ENCODE measurements at regions of chr21 and their contacts with region 1.

Region 1: GRCh38 chr21:38805328-38806152 is at the start of gene ETS2:
- DNase-seq: peak; percentile 83
- H3K4me3 ChIP-seq: peak within 1 kb of the TSS; percentile 88
- H3K27ac ChIP-seq: peak within 1 kb of the TSS; percentile 44
- H3K4me1 ChIP-seq: peaks cover 41% of the 10 kb centered on the region
- CTCF ChIP-seq: peak; percentile 35; the same call in 1 of the 2 replicates
- total RNA-seq, gene ETS2: 9.8 and 10.3 TPM in 2 replicates

Region 2: GRCh38 chr21:38733973-38734546 is 71.5 kb before region 1 on chr21:
- CTCF ChIA-PET with region 1: no interaction called
- POLR2A ChIA-PET with region 1: interaction called, 6 read pairs
- intact Hi-C with region 1: loop called (anchors 5 kb)
- DNase-seq: peak; percentile 57
- H3K4me3 ChIP-seq: peak overlapping the region; percentile 61
- H3K27ac ChIP-seq: no peak overlapping the region
- H3K4me1 ChIP-seq: peaks cover 10% of the 10 kb centered on the region
- CTCF ChIP-seq: peak; percentile 99

Region 3: DNA sequence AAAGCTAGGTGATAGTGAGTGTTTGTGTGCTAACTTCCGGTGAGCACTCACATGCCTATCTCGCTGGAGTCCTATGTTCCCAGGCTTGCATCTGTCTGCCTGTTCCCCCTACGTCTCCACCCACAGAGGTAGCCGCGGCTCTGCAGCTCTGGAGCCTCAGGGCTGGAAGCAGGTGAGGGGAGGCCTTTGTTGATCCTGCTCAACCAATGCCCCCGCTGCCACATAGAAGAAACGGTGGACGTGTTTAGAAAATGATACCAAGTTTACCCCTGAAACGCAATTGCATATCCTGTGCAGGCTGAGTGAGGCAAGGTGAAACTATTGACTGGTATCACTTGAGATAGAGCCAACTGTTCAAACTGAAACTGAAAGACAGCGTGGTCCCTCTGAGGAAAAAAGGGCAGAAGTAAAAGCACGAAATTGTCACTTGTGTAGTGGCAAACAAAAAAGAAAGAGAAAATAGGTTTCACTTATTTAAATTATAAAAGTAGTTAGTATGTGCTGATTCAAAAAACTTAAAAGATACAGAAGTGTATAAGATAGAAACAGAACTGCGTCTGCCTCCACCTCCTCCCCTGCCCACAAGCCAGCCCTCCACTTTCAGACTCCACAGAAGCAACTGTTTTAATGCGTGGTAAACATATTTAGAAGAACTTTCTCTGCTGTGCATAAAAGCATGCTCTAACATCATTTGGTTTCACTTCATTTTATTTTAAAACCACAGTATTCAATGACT is 38.4 kb before region 1 on chr21:
- CTCF ChIA-PET with region 1: no interaction called
- POLR2A ChIA-PET with region 1: interaction called, 4 read pairs
- intact Hi-C with region 1: loop called (anchors 1 kb)
- DNase-seq: peak; percentile 79
- H3K4me3 ChIP-seq: peak overlapping the region; percentile 59
- H3K27ac ChIP-seq: peak overlapping the region; percentile 77
- H3K4me1 ChIP-seq: peaks cover 21% of the 10 kb centered on the region
- CTCF ChIP-seq: no peak

Region 4: GRCh38 chr21:38843806-38844503 is 38.4 kb after region 1 on chr21:
- CTCF ChIA-PET with region 1: no interaction called
- POLR2A ChIA-PET with region 1: no interaction called
- intact Hi-C with region 1: no loop called
- DNase-seq: no peak
- H3K4me3 ChIP-seq: no peak overlapping the region
- H3K27ac ChIP-seq: no peak overlapping the region
- H3K4me1 ChIP-seq: no peaks in the 10 kb centered on the region
- CTCF ChIP-seq: no peak

Region 5: GRCh38 chr21:38861989-38862683 is 56.6 kb after region 1 on chr21:
- CTCF ChIA-PET with region 1: no interaction called
- POLR2A ChIA-PET with region 1: interaction called, 4 read pairs
- intact Hi-C with region 1: loop called (anchors 5 kb)
- DNase-seq: peak; percentile 91
- H3K4me3 ChIP-seq: peak overlapping the region; percentile 24
- H3K27ac ChIP-seq: peak overlapping the region; percentile 78
- H3K4me1 ChIP-seq: peaks cover 44% of the 10 kb centered on the region
- CTCF ChIP-seq: no peak

Region 6: DNA sequence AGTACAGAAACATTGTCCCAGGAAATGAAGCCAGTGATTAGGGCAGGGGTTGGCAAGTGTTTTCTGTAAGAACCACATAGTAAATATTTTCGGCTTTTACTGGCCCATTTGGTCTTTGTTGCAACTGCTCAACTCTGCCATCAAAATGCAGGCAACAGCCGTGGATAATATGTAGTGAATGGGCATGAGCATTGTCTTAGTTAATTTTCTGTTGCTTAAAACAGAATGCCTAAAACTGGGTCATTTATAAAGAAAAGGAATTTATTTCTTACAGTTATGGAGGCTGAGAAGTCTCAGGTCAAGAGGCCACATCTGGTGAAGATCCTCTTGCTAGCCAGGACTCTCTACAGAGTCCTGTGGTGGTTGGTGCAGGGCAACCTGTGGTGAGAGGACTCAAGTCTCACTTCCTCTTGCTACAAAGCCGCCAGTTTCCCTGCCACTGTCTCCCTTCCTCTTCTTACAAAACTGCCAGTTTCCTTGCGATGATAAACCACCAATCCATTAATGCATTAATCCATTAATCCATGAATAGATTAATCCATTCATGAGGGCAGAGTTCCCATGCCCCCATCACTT is 211.3 kb after region 1 on chr21:
- CTCF ChIA-PET with region 1: no interaction called
- POLR2A ChIA-PET with region 1: no interaction called
- intact Hi-C with region 1: loop called (anchors 2 kb)
- DNase-seq: peak; percentile 85
- H3K4me3 ChIP-seq: no peak overlapping the region
- H3K27ac ChIP-seq: no peak overlapping the region
- H3K4me1 ChIP-seq: peaks cover 18% of the 10 kb centered on the region
- CTCF ChIP-seq: no peak